PC-3 (cell line): ENCODE measurements at regions of chr5 and their contacts with region 1.

Region 1: DNA sequence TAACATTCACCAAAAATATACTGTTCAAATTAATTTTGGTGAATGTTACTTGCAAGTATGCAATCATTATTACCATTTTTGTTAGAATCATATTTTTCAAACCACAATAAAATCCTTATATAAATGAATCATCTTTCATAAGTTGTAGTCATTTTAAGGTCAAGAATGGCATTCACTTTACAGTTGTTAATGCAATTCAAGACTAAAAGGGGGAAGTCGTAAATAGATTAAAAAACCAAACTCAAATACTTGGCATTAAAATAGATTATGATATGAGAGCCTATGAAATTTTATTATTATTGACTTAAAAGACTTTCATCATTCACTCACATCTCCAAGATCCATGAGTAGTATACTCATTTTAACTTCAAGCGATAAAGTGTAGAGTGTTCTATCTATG is 11.6 kb downstream of the CDH9 start:
- DNase-seq: peak; percentile 80
- ATAC-seq: peak; percentile 92
- H3K4me3 ChIP-seq: no peak overlapping the region
- H3K27ac ChIP-seq: no peak overlapping the region
- H3K4me1 ChIP-seq: peaks cover 5% of the 10 kb centered on the region
- H3K27me3 ChIP-seq: no peaks in the 10 kb centered on the region
- CTCF ChIP-seq: no peak

Region 2: DNA sequence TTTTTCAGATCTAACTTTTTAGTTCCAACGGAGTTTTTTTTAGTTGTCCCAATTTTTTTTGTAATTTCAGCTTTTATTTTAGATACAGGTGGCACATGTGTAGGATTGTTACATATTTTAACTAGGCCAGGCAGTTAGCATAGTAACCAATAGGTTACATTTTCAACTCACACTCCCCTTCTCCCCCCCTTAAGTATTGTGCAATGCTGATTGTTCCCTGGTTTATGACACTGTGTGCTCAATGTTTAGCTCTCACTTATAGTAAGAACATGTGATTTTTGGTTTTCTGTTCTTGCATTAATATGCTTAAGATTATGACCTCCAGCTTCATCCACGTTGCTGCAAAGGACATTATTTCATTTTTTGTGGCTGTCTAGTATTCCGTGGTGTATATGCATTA is 491.6 kb before region 1 on chr5:
- CTCF ChIA-PET with region 1: no interaction called
- POLR2A ChIA-PET with region 1: no interaction called
- intact Hi-C with region 1: no loop called
- DNase-seq: no peak
- ATAC-seq: no peak
- H3K4me3 ChIP-seq: no peak overlapping the region
- H3K27ac ChIP-seq: no peak overlapping the region
- H3K4me1 ChIP-seq: no peaks in the 10 kb centered on the region
- H3K27me3 ChIP-seq: no peaks in the 10 kb centered on the region
- CTCF ChIP-seq: no peak

Region 3: GRCh38 chr5:27722337-27722736 is 695.5 kb after region 1 on chr5:
- CTCF ChIA-PET with region 1: no interaction called
- POLR2A ChIA-PET with region 1: no interaction called
- intact Hi-C with region 1: loop called (anchors 5 kb)
- DNase-seq: peak; percentile 44
- ATAC-seq: peak; percentile 86
- H3K4me3 ChIP-seq: no peak overlapping the region
- H3K27ac ChIP-seq: no peak overlapping the region
- H3K4me1 ChIP-seq: peaks cover 20% of the 10 kb centered on the region
- H3K27me3 ChIP-seq: no peaks in the 10 kb centered on the region
- CTCF ChIP-seq: no peak